ENCODE measurements at regions of chr20 and their contacts with region 1.

Region 1: GRCh38 chr20:53738039-53738944 is 144.7 kb upstream of the ZNF217 start:
- DNase-seq: peak; percentile 88
- H3K4me3 Mint-ChIP-seq: peak overlapping the region; percentile 77
- H3K27ac Mint-ChIP-seq: peak overlapping the region; percentile 98
- H3K4me1 Mint-ChIP-seq: peaks cover 73% of the 10 kb centered on the region
- H3K27me3 Mint-ChIP-seq: no peaks in the 10 kb centered on the region
- CTCF ChIP-seq: no peak

Region 2: DNA sequence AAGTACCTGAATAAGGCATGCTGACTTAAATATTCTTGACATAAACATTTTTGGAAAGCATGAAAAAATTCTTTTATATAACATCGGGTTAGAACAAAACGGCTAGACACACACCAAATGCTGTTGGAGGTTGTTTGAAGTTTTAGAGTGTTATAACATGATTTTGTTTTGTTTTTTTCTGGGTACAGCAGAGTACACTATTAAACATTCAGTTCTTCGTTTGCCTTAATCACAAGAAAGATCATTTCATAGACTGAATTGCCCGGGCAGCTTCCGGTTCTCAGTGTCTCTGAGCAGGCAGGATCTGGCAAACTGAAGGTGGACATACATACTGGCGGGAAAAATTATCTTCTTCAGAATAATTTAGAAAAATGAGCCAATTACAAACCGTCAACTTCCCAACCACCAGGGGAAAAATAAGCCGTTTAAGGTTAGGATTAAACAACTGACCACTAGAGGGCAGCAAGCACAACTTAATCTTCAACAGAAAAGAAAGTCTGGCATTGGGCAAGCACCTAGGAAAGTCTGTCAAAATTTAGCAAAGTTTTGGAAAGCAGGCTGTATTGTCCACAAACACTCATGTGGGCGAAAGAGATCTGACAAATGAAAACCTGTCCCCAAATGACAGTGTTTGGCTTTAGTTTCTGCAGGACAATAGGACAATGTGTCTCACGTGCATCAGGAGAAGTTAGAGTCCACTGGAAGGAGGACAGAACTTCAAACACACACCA is 159.6 kb before region 1 on chr20:
- CTCF ChIA-PET with region 1: interaction called, 9 read pairs
- intact Hi-C with region 1: loop called (anchors 2 kb)
- DNase-seq: peak; percentile 81
- H3K4me3 Mint-ChIP-seq: peak overlapping the region; percentile 63
- H3K27ac Mint-ChIP-seq: peak overlapping the region; percentile 80
- H3K4me1 Mint-ChIP-seq: peaks cover 60% of the 10 kb centered on the region
- H3K27me3 Mint-ChIP-seq: no peaks in the 10 kb centered on the region
- CTCF ChIP-seq: peak; percentile 95

Region 3: DNA sequence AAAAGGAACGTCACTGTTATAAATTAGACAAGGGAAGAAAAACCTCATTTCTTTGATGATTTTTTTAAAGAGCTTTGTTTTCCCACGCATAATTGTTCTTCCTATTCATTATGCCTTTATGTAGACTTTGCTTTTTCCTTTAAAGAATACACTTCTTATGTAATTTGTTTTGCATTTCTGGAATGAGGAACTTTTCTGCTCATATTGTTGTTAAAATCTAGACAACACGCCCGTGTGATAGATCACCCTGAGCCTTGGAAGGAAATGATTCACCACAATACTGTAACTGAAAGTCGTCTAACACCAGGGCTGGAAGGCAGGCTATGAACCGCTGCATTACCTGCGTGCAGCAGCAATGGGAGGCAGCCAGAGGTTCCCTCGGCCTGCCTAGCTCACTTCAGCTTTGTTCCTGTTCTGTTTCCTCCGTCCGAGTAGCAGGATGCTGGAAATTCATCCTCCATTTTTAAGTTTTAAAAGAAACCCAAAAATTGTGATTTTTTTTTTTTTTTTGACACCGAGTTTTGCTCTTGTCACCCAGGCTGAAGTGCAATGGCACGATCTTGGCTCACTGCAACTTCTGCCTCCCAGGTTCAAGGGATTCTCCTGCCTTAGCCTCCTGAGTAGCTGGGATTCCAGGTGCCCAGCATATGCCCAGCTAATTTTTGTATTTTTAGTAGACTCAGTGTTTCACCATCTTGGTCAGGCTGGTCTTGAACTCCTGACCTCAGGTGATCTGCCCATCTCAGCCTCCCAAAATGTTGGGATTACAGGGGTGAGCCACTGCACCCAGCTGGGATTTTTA is 95.1 kb before region 1 on chr20:
- CTCF ChIA-PET with region 1: interaction called, 10 read pairs
- intact Hi-C with region 1: loop called (anchors 2 kb)
- DNase-seq: peak; percentile 75
- H3K4me3 Mint-ChIP-seq: peak overlapping the region; percentile 50
- H3K27ac Mint-ChIP-seq: peak overlapping the region; percentile 89
- H3K4me1 Mint-ChIP-seq: peaks cover 9% of the 10 kb centered on the region
- H3K27me3 Mint-ChIP-seq: no peaks in the 10 kb centered on the region
- CTCF ChIP-seq: no peak

Region 4: GRCh38 chr20:53748821-53749421 is 10.6 kb after region 1 on chr20:
- CTCF ChIA-PET with region 1: interaction called, 12 read pairs
- intact Hi-C with region 1: no loop called
- DNase-seq: no peak
- H3K4me3 Mint-ChIP-seq: no peak overlapping the region
- H3K27ac Mint-ChIP-seq: peak overlapping the region; percentile 28
- H3K4me1 Mint-ChIP-seq: peaks cover 52% of the 10 kb centered on the region
- H3K27me3 Mint-ChIP-seq: no peaks in the 10 kb centered on the region
- CTCF ChIP-seq: no peak

Region 5: GRCh38 chr20:53828682-53829254 is 90.5 kb after region 1 on chr20:
- CTCF ChIA-PET with region 1: interaction called, 5 read pairs
- intact Hi-C with region 1: loop called (anchors 1 kb)
- DNase-seq: peak; percentile 27
- H3K4me3 Mint-ChIP-seq: peak overlapping the region; percentile 64
- H3K27ac Mint-ChIP-seq: peak overlapping the region; percentile 98
- H3K4me1 Mint-ChIP-seq: peaks cover 55% of the 10 kb centered on the region
- H3K27me3 Mint-ChIP-seq: no peaks in the 10 kb centered on the region
- CTCF ChIP-seq: no peak

Region 6: GRCh38 chr20:53915446-53916172 is 177.3 kb after region 1 on chr20:
- CTCF ChIA-PET with region 1: interaction called, 18 read pairs
- intact Hi-C with region 1: loop called (anchors 2 kb)
- DNase-seq: peak; percentile 99
- H3K4me3 Mint-ChIP-seq: peak overlapping the region; percentile 71
- H3K27ac Mint-ChIP-seq: peak overlapping the region; percentile 90
- H3K4me1 Mint-ChIP-seq: peaks cover 50% of the 10 kb centered on the region
- H3K27me3 Mint-ChIP-seq: no peaks in the 10 kb centered on the region
- CTCF ChIP-seq: peak; percentile 91